ENCODE measurements at regions of chr12 and their contacts with region 1.

Region 1: GRCh38 chr12:2291182-2291832 is 238.5 kb downstream of the CACNA1C start:
- DNase-seq: peak in 1 of 2 experiments; percentile 79
- H3K4me3 ChIP-seq: no peak overlapping the region
- H3K27ac ChIP-seq: no peak overlapping the region
- H3K4me1 ChIP-seq: peaks cover 3 to 7% (median 3%) of the 10 kb centered on the region in 4 experiments
- H3K27me3 ChIP-seq: no peaks in the 10 kb centered on the region
- CTCF ChIP-seq: peak; percentile 56 to 84 (median 76)
- EP300 ChIP-seq: no peak
- POLR2A ChIP-seq: no peak
- RAD21 ChIP-seq: peak; percentile 64 to 74

Region 2: DNA sequence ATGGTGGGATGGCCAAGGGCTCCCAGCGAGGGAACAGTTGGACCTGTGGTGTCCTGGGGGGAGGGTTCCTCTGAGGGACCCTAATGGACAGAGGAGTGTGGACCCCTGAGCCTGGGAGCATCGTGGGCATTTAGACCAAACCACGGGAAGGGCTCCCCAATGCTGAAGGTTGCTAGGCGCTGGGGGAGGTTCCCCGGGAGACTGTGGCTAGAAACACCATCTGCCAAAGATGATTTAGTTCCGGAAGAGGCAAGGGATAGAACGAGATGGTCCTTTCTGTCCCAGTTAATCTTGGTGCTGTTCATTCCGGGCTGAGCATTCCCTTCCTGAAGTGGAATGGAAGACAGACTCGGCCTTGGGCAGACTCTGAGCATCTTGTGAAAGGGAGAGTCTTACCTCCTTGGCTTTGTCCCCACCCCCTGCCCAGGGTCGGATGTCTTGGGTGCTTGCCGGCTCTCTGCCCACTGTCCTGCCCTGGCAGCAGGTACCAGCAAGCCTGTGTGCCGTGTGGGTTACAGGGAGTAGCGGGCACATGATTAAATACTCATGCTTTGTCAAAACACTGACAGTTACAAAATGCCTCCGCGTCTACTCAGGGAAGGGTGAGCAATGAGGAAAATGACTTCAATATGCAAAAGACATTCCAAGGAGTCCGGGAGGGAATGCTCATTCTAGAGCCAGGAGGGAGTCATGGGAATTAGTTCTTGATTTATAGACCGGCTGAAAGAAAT is 22.6 kb before region 1 on chr12:
- CTCF ChIA-PET with region 1: interaction called, 74 read pairs
- POLR2A ChIA-PET with region 1: no interaction called
- DNase-seq: no peak
- H3K4me3 ChIP-seq: no peak overlapping the region
- H3K27ac ChIP-seq: no peak overlapping the region
- H3K4me1 ChIP-seq: peaks cover 0 to 12% (median 3%) of the 10 kb centered on the region in 4 experiments; a peak in 6 of 7 replicates
- H3K27me3 ChIP-seq: no peaks in the 10 kb centered on the region
- CTCF ChIP-seq: no peak
- EP300 ChIP-seq: no peak
- POLR2A ChIP-seq: no peak
- RAD21 ChIP-seq: no peak

Region 3: GRCh38 chr12:2301531-2302461 is 10.5 kb after region 1 on chr12:
- CTCF ChIA-PET with region 1: interaction called, 74 read pairs
- POLR2A ChIA-PET with region 1: no interaction called
- DNase-seq: no peak
- H3K4me3 ChIP-seq: no peak overlapping the region
- H3K27ac ChIP-seq: no peak overlapping the region
- H3K4me1 ChIP-seq: peaks cover 3 to 11% (median 8%) of the 10 kb centered on the region in 4 experiments
- H3K27me3 ChIP-seq: no peaks in the 10 kb centered on the region
- CTCF ChIP-seq: no peak
- EP300 ChIP-seq: no peak
- POLR2A ChIP-seq: no peak
- RAD21 ChIP-seq: no peak

Region 4: DNA sequence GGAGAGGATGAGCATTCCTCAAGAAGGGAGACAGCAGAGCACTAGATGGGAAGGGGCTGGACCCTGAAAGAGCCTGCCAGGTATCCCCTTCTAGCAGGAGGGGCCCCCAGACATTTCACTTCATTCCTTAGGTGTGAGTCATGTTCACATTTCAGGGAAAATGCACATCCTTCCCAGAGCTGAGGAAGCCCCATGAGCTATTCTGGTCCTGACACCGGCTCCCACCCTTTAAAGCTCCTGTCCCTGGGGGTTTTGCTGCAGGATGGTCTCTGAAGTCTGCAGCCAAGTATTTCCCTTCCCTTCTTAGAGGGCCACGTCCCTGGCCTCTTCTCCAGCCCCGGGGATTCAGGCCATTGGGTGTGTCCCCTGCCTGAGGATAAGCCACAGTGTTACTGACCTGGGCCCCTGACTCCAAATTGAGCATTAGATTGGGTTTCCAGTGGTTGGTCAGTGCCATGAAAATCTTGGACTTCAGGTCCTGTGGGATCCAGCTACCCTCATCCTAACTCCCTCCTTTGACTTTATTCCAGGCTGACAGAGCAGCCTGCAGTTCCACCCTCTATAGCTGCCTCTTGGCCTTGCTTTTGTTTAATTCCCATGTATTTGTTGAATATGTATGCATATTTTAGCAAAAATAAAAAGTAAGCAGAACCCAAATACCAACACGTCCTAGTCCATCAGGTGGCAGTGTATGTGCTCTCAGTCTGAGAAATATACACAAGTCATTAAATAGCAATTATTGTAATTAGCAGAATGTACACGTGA is 28.6 kb after region 1 on chr12:
- CTCF ChIA-PET with region 1: interaction called, 30 read pairs
- POLR2A ChIA-PET with region 1: no interaction called
- DNase-seq: no peak
- H3K4me3 ChIP-seq: no peak overlapping the region
- H3K27ac ChIP-seq: no peak overlapping the region
- H3K4me1 ChIP-seq: peaks cover 0 to 2% (median 0%) of the 10 kb centered on the region in 4 experiments; a peak in 1 of 7 replicates
- H3K27me3 ChIP-seq: no peaks in the 10 kb centered on the region
- CTCF ChIP-seq: no peak
- EP300 ChIP-seq: no peak
- POLR2A ChIP-seq: no peak
- RAD21 ChIP-seq: no peak

Region 5: GRCh38 chr12:2344885-2345284 is 53.6 kb after region 1 on chr12:
- CTCF ChIA-PET with region 1: interaction called, 15 read pairs
- POLR2A ChIA-PET with region 1: no interaction called
- DNase-seq: no peak
- H3K4me3 ChIP-seq: no peak overlapping the region
- H3K27ac ChIP-seq: no peak overlapping the region
- H3K4me1 ChIP-seq: peaks cover 3 to 12% (median 9%) of the 10 kb centered on the region in 4 experiments
- H3K27me3 ChIP-seq: no peaks in the 10 kb centered on the region
- CTCF ChIP-seq: no peak
- EP300 ChIP-seq: no peak
- POLR2A ChIP-seq: no peak
- RAD21 ChIP-seq: no peak